ENCODE measurements at regions of chr4 and their contacts with region 1.

Region 1: DNA sequence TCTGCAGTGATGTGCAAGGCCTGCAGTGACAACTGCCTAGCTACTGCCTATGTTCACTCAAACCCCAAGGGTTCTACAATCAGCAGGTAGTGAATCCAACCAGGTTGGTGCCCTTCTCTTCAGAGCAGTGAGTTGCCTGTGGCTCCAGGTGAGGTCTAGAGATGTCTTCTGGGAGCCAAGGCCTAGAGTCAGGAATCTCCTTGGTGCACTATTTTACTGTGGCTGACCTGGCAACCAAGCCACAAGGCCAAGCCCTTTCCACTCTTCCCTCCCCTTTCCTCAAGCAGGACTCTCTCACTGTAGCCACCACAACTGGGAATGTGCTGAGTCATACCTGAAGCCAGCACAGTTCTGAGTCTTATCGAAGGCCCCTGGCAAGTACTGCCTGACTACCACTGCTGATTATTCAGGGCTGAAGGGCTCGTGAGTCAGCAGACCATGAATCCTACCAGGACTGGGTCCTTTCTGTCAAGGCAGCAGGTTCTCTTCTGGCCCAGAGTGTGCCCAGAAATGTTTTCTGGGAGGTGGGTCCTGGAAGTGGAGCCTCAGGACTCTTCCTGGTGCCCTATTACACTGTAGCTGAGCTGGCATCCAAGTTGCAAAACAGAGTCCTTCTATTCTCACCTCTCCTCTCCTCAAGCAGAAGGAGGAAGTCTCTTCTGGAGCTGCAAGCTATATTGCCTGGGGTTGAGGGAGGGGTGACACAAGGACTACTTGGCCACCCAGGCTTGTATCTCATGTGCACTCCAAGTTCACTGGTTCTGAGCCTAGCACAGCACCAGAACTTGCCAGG is 111.6 kb downstream of the BTC start:
- DNase-seq: no peak
- ATAC-seq: peak in 1 of 8 donors; percentile 26
- H3K4me3 ChIP-seq: no peak overlapping the region
- H3K27ac ChIP-seq: no peak overlapping the region
- H3K4me1 ChIP-seq: no peaks in the 10 kb centered on the region
- H3K27me3 ChIP-seq: peaks cover 0 to 7% (median under 1%) of the 10 kb centered on the region in 7 donors
- CTCF ChIP-seq: no peak

Region 2: DNA sequence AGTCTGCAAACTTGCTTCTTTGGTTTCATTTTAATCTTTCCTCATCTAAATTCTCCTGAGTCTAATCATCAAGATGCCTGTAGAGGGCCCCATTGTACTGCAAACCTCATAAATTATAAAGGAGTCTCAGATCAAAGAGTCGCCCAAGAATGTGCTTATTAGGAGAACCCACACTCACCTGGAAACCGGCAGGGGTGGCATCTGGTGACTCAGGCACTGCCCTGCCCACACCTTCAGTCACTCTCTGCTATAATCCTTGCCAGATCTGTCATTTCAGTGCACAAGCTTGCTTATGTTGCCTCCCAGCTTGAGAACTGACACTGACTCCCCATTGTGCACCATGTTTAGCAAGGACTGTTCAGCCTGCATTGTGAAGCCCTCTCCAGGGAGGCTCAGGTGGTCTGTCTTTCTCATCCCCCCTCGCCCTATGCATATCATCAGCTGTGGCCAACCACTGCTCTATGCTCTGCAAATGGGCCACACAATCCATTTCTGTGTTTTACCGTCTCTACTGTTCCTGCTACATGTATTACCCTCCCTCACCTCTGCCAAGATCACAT is 362.1 kb before region 1 on chr4:
- intact Hi-C with region 1: loop called in 5 of 10 experiments (anchors 5 to 10 kb)
- DNase-seq: no peak
- ATAC-seq: peak in 3 of 8 donors; percentile 29 to 61 (median 49)
- H3K4me3 ChIP-seq: no peak overlapping the region
- H3K27ac ChIP-seq: no peak overlapping the region
- H3K4me1 ChIP-seq: no peaks in the 10 kb centered on the region
- H3K27me3 ChIP-seq: peaks cover 0 to 29% (median 7%) of the 10 kb centered on the region in 7 donors
- CTCF ChIP-seq: peak in 8 of 9 donors; percentile 12 to 57 (median 46)

Measured in heart right ventricle (tissue), 16 donors.